ENCODE measurements at regions of chr19 and their contacts with region 1.

Region 1: GRCh38 chr19:13060964-13061927 is 41.4 kb downstream of the LYL1 start:
- DNase-seq: peak; percentile 72 to 82
- ATAC-seq: peak; percentile 50 to 53
- H3K4me3 ChIP-seq: peak overlapping the region; percentile 29 to 59 (median 54)
- H3K27ac ChIP-seq: peak overlapping the region; percentile 92 to 100 (median 96)
- H3K4me1 ChIP-seq: peaks cover 95 to 96% of the 10 kb centered on the region in 2 donors
- H3K27me3 ChIP-seq: no peaks in the 10 kb centered on the region
- CTCF ChIP-seq: peak; percentile 88 to 99 (median 96)
- POLR2A ChIP-seq: no peak

Region 2: DNA sequence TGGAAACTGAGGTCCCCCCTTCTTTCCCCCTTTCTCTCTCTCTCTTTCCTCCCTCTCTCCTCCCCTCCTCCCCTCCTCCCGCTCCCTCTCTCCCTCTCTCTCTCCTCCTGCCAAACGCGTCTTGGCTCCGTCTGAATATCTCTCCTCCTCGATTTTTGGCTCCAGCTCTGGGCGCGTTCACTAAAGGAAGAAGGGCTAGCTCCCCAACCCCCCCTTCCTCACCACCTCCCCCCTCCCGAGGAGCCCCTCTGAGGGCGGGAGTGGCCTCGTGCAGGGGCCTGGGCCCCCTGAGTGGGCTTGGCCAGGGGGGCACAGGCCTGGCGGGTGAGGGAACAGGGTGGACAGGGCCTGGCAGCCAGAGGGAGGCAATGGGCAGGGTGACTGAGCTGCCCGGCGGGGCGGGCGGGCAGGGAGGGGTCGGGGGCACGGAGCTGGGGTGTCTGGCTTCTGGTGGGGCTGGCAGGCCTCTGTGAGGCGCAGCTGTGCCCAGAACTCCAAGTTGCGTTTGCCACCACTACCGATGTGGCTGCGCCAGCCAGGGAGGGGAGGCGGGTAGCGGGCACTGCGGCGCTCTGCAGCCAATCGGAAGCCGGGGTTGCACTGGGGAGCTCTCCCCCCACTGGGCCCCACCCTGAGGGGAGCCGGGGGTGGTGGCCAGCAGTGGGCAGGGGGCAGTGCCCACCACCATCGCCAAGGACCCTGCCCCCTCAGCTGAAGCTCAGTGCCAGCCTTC is 58.9 kb before region 1 on chr19:
- in situ Hi-C with region 1: no loop called
- intact Hi-C with region 1: loop called (anchors 5 kb)
- DNase-seq: peak; percentile 69 to 92
- ATAC-seq: peak; percentile 57 to 63
- H3K4me3 ChIP-seq: peak overlapping the region; percentile 55 to 66 (median 61)
- H3K27ac ChIP-seq: peak overlapping the region; percentile 97 to 100 (median 99)
- H3K4me1 ChIP-seq: peaks cover 86 to 92% of the 10 kb centered on the region in 2 donors
- H3K27me3 ChIP-seq: no peaks in the 10 kb centered on the region
- CTCF ChIP-seq: peak in 3 of 5 experiments; percentile 15 to 49 (median 28)
- POLR2A ChIP-seq: peak; percentile 54 to 65

Region 3: GRCh38 chr19:13033819-13034611 is 27.2 kb before region 1 on chr19:
- in situ Hi-C with region 1: no loop called
- intact Hi-C with region 1: loop called (anchors 1 kb)
- DNase-seq: peak; percentile 74 to 90
- ATAC-seq: peak; percentile 39 to 49
- H3K4me3 ChIP-seq: no peak overlapping the region
- H3K27ac ChIP-seq: peak overlapping the region; percentile 97 to 100 (median 99)
- H3K4me1 ChIP-seq: peaks cover 99% of the 10 kb centered on the region in 2 donors
- H3K27me3 ChIP-seq: no peaks in the 10 kb centered on the region
- CTCF ChIP-seq: peak; percentile 83 to 92 (median 87)
- POLR2A ChIP-seq: no peak